ENCODE measurements at regions of chr20 and their contacts with region 1.

Region 1: DNA sequence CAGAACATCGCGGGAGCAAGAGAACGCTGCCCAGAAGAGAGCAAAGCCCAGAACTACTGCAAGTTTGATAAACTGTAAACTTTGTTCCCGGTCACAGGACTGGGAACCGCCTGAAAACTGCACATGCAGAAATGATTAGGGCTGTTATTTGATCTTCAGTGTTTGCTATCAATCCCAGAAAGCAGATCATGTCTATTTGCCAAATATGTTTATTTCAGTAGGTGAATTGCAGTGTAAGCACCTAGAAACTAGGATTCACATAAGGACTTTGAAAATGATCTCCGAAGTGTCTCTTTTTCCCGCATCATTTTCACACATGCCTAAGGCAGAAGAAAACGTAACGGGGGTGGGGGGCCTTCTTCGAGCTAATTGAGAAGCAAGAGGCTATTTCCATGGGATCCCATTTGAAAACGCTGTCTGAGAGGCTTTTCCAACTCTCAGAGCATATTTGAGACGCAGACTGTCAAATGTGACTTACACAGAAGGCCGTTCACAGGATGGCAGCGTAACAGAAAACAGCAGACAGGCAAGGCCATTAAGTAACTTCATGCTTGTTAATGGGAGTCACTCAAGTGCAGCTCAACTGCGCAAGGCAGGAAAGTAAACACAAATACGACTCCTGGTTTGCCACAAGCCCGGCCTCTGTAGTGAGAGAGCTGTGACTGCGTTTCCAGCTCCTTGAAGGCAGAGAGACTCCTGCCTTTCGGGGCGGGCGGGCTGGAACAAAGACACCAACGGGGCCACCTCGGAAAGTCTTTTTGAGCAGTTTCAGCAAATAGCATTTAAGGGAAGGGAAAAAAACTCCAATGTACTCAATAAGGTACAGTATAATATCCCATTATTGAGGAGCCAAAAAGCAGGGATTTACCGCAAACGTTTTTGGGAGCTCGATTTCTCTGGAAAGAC is 144.7 kb upstream of the ZNF217 start:
- DNase-seq: no peak
- ATAC-seq: peak; percentile 81

Region 2: DNA sequence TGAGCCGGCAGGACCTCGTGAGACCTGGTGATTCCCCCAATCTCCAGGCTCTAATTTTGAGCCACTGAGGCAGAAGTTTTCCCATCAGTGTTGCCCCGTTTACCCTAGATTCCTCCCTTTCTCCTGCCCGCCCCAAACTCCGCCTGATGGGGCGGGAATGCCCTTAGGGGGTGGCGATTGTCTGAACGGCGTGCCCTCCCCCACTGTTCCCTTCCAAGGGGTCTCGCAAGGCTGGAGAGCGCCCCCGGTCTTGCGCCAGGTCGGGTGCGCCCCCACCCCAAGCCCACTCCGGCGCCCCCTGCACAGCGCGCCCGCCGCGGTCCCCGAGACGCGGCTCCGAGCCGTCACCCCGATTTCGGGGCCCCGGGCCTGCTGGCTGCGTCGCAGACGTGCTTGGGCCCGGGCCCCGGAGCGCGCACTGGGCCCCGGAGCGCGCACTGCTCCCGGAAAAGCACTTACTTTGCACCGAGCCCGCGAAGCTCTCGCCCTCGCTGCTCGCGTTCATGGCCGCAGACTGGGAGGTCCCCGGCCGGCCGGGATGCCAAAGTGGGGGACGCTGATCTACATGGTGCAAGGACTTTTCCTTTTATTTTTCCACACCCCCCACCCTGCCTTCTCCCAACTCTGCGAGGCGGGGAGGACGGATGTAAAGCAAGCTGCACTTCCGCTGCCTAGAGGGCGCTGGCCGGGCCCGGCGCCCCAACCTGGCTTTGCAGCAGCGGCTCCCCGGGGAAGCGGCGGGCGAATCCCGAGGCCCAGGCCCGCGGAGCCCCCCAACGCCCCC is 1547.0 kb before region 1 on chr20 and contains the start of gene ZFP64:
- intact Hi-C with region 1: loop called (anchors 10 kb)
- DNase-seq: peak; percentile 84
- ATAC-seq: peak; percentile 93
- total RNA-seq, gene ZFP64: 7.6 TPM

Region 3: GRCh38 chr20:53594068-53595017 is 143.9 kb before region 1 on chr20:
- intact Hi-C with region 1: loop called (anchors 2 kb)
- DNase-seq: peak; percentile 99
- ATAC-seq: peak; percentile 94

Region 4: GRCh38 chr20:53652090-53652858 is 86.0 kb before region 1 on chr20:
- intact Hi-C with region 1: loop called (anchors 5 kb)
- DNase-seq: no peak
- ATAC-seq: no peak

Region 5: DNA sequence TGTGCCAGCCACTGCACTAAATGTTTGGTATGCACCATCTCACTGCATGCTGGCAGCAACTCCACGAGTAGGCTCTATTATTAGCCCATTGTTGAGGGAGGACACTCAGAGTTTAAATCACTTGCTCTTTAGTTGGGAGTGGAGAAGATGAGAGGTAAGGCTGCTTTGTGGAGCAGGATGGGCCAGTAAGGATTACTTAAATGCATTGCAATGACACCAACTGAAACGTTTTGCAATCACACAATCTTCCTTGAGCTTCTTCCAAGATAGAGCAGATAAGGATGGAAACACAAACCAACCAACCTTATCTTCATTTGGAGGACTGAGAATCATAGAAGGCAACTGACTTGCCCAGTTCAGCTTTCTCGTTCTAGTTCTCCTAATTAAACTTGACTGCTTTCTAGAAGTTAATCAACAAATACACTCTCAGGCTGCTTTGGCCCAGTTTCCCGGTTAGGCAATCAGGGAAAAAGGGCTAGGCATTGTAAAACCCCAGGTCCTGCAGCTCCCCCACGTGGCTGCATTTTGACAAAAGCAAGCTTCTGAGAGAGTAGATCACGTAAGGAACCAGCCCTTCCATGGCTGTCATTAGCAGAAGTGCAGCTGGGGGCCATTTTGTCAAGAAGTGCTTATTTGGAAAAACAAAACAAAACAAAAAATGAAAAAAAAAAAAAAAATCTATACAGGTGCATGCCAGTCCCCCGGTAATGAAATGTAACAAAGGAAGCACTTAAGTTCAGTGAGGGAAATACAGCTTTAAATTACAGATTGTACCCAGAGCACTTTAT is 201.5 kb after region 1 on chr20:
- intact Hi-C with region 1: loop called (anchors 5 kb)
- DNase-seq: peak; percentile 93
- ATAC-seq: peak; percentile 90